K562 (cell line): ENCODE measurements at regions of chr18 and their contacts with region 1.

Region 1: GRCh38 chr18:5253910-5254309 is 41.6 kb downstream of the ZBTB14 start:
- DNase-seq: no peak
- ATAC-seq: no peak
- H3K4me3 ChIP-seq: no peak overlapping the region
- H3K27ac ChIP-seq: no peak overlapping the region
- H3K4me1 ChIP-seq: no peaks in the 10 kb centered on the region
- H3K27me3 ChIP-seq: no peaks in the 10 kb centered on the region; a peak in 1 of 5 replicates
- CTCF ChIP-seq: no peak
- EP300 ChIP-seq: no peak
- POLR2A ChIP-seq: no peak
- RAD21 ChIP-seq: no peak

Region 2: GRCh38 chr18:5237723-5238370 is 16.1 kb before region 1 on chr18:
- CTCF ChIA-PET with region 1: no interaction called
- POLR2A ChIA-PET with region 1: interaction called, 12 read pairs
- in situ Hi-C with region 1: no loop called
- intact Hi-C with region 1: no loop called
- DNase-seq: peak; percentile 87 to 95 (median 88)
- ATAC-seq: peak; percentile 96
- H3K4me3 ChIP-seq: peak overlapping the region; percentile 76
- H3K27ac ChIP-seq: peak overlapping the region; percentile 92
- H3K4me1 ChIP-seq: peaks cover 3 to 20% of the 10 kb centered on the region in 2 experiments
- H3K27me3 ChIP-seq: no peaks in the 10 kb centered on the region
- CTCF ChIP-seq: peak in 1 of 3 experiments; percentile 26; a peak in 1 of 6 replicates
- EP300 ChIP-seq: peak; percentile 13; the same call in 1 of the 2 replicates
- POLR2A ChIP-seq: peak; percentile 95
- RAD21 ChIP-seq: no peak

Region 3: DNA sequence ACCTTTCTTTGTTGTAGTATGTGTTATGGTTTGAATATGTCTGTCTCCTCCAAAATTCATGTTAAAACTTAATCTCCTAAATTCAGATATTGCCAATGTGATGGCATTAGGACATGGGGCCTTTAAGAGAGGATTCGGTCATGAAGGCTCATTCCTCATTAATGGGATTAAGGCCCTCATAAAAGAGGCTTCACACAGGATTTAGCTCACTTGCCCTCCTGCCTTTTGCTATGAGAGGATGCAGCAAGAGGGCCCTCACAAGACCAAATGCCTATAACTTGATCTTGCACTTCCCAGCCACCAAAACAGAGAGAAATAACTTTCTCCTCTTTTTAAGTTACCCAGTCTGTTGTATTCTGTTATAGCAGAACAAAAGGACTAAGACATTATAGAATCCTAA is 22.0 kb after region 1 on chr18:
- CTCF ChIA-PET with region 1: no interaction called
- POLR2A ChIA-PET with region 1: no interaction called
- in situ Hi-C with region 1: no loop called
- intact Hi-C with region 1: no loop called
- DNase-seq: no peak
- ATAC-seq: no peak
- H3K4me3 ChIP-seq: no peak overlapping the region
- H3K27ac ChIP-seq: no peak overlapping the region
- H3K4me1 ChIP-seq: no peaks in the 10 kb centered on the region
- H3K27me3 ChIP-seq: no peaks in the 10 kb centered on the region
- CTCF ChIP-seq: no peak
- EP300 ChIP-seq: no peak
- POLR2A ChIP-seq: no peak
- RAD21 ChIP-seq: no peak

Region 4: GRCh38 chr18:5317186-5317585 is 63.3 kb after region 1 on chr18:
- CTCF ChIA-PET with region 1: no interaction called
- POLR2A ChIA-PET with region 1: no interaction called
- in situ Hi-C with region 1: no loop called
- intact Hi-C with region 1: no loop called
- DNase-seq: no peak
- ATAC-seq: no peak
- H3K4me3 ChIP-seq: no peak overlapping the region
- H3K27ac ChIP-seq: no peak overlapping the region
- H3K4me1 ChIP-seq: no peaks in the 10 kb centered on the region
- H3K27me3 ChIP-seq: no peaks in the 10 kb centered on the region
- CTCF ChIP-seq: no peak
- EP300 ChIP-seq: no peak
- POLR2A ChIP-seq: no peak
- RAD21 ChIP-seq: no peak